Activated naive CD4-positive, alpha-beta T cell treated with anti-CD3 and anti-CD28 coated beads for 36 hours (primary cell): ENCODE measurements at regions of chr4 and their contacts with region 1.

Region 1: GRCh38 chr4:139603576-139604387 is 47.8 kb upstream of the SETD7 start:
- DNase-seq: peak; percentile 55
- H3K4me3 Mint-ChIP-seq: no peak overlapping the region
- H3K27ac Mint-ChIP-seq: no peak overlapping the region
- H3K4me1 Mint-ChIP-seq: peaks cover 15% of the 10 kb centered on the region
- H3K27me3 Mint-ChIP-seq: peaks cover 12% of the 10 kb centered on the region

Region 2: DNA sequence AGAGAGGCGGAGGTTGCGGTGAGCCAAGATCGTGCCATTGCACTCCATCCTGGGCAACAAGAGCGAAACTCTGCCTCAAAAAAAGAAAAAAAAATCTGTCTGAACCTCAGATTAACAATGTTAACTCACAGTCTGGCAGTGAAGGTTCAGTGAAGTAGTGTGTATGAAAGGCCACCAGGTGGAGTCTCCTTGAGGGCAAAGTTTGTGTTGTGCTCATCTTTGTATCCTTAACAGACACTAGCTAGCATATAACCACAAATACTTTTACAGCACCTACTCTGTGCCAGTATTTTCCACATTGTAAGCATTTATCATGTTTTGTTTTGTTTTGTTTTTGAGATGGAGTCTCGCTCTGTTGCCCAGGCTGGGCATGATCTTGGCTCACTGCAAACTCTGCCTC is 15.9 kb after region 1 on chr4:
- CTCF ChIA-PET with region 1: interaction called, 10 read pairs
- intact Hi-C with region 1: no loop called
- DNase-seq: peak; percentile 16
- H3K4me3 Mint-ChIP-seq: no peak overlapping the region
- H3K27ac Mint-ChIP-seq: no peak overlapping the region
- H3K4me1 Mint-ChIP-seq: no peaks in the 10 kb centered on the region
- H3K27me3 Mint-ChIP-seq: no peaks in the 10 kb centered on the region

Region 3: GRCh38 chr4:139645458-139645857 is 41.7 kb after region 1 on chr4:
- CTCF ChIA-PET with region 1: interaction called, 123 read pairs
- intact Hi-C with region 1: no loop called
- DNase-seq: no peak
- H3K4me3 Mint-ChIP-seq: no peak overlapping the region
- H3K27ac Mint-ChIP-seq: no peak overlapping the region
- H3K4me1 Mint-ChIP-seq: no peaks in the 10 kb centered on the region
- H3K27me3 Mint-ChIP-seq: no peaks in the 10 kb centered on the region

Region 4: GRCh38 chr4:140252742-140253555 is 649.2 kb after region 1 on chr4:
- CTCF ChIA-PET with region 1: interaction called, 3 read pairs
- intact Hi-C with region 1: loop called (anchors 1 kb)
- DNase-seq: peak; percentile 65
- H3K4me3 Mint-ChIP-seq: peak overlapping the region; percentile 5
- H3K27ac Mint-ChIP-seq: no peak overlapping the region
- H3K4me1 Mint-ChIP-seq: peaks cover 11% of the 10 kb centered on the region
- H3K27me3 Mint-ChIP-seq: peaks cover 6% of the 10 kb centered on the region